ENCODE measurements at regions of chr17 and their contacts with region 1.

Region 1: GRCh38 chr17:9021158-9021991 is at the start of gene NTN1:
- DNase-seq: peak; percentile 58
- H3K4me3 Mint-ChIP-seq: peak within 1 kb of the TSS; percentile 79
- H3K27ac Mint-ChIP-seq: peak within 1 kb of the TSS; percentile 17
- H3K4me1 Mint-ChIP-seq: peaks cover 4% of the 10 kb centered on the region
- H3K27me3 Mint-ChIP-seq: peaks cover 55% of the 10 kb centered on the region
- total RNA-seq, gene NTN1: 0.34 and 0.44 TPM in 2 replicates

Region 2: GRCh38 chr17:7214300-7215135 is 1806.9 kb before region 1 on chr17:
- intact Hi-C with region 1: loop called (anchors 10 kb)
- DNase-seq: peak; percentile 99
- H3K4me3 Mint-ChIP-seq: peak overlapping the region; percentile 91
- H3K27ac Mint-ChIP-seq: peak overlapping the region; percentile 98
- H3K4me1 Mint-ChIP-seq: peaks cover 55% of the 10 kb centered on the region
- H3K27me3 Mint-ChIP-seq: peaks cover 14% of the 10 kb centered on the region

Region 3: GRCh38 chr17:8630802-8631553 is 390.4 kb before region 1 on chr17:
- intact Hi-C with region 1: loop called (anchors 2 kb)
- DNase-seq: peak; percentile 88
- H3K4me3 Mint-ChIP-seq: peak overlapping the region; percentile 92
- H3K27ac Mint-ChIP-seq: no peak overlapping the region
- H3K4me1 Mint-ChIP-seq: peaks cover 18% of the 10 kb centered on the region
- H3K27me3 Mint-ChIP-seq: peaks cover 52% of the 10 kb centered on the region

Region 4: GRCh38 chr17:8798846-8799569 is 222.4 kb before region 1 on chr17 and contains the start of gene MFSD6L:
- intact Hi-C with region 1: no loop called
- DNase-seq: no peak
- H3K4me3 Mint-ChIP-seq: no peak within 1 kb of the TSS
- H3K27ac Mint-ChIP-seq: no peak within 1 kb of the TSS
- H3K4me1 Mint-ChIP-seq: no peaks in the 10 kb centered on the region
- H3K27me3 Mint-ChIP-seq: peaks cover 6% of the 10 kb centered on the region
- total RNA-seq, gene MFSD6L: 0.12 and 0.13 TPM in 2 replicates

Region 5: GRCh38 chr17:9003355-9004131 is 17.8 kb before region 1 on chr17:
- intact Hi-C with region 1: loop called (anchors 2 kb)
- DNase-seq: no peak
- H3K4me3 Mint-ChIP-seq: no peak overlapping the region
- H3K27ac Mint-ChIP-seq: no peak overlapping the region
- H3K4me1 Mint-ChIP-seq: no peaks in the 10 kb centered on the region
- H3K27me3 Mint-ChIP-seq: peaks cover 69% of the 10 kb centered on the region